ENCODE measurements at regions of chr15 and their contacts with region 1.

Region 1: GRCh38 chr15:99104788-99105513 is at the start of gene SYNM:
- DNase-seq: peak; percentile 70 to 84 (median 71)
- ATAC-seq: peak; percentile 96
- H3K4me3 ChIP-seq: no peak within 1 kb of the TSS
- H3K4me1 ChIP-seq: peaks cover 11% of the 10 kb centered on the region
- CTCF ChIP-seq: peak; percentile 62
- total RNA-seq, gene SYNM: 10.9 to 777 (median 37.0) TPM

Region 2: GRCh38 chr15:99076552-99077308 is 28.2 kb before region 1 on chr15:
- intact Hi-C with region 1: no loop called
- DNase-seq: peak in 2 of 3 donors; percentile 33 to 62
- ATAC-seq: peak; percentile 92
- H3K4me3 ChIP-seq: no peak overlapping the region
- H3K4me1 ChIP-seq: no peaks in the 10 kb centered on the region
- CTCF ChIP-seq: peak; percentile 50

Region 3: DNA sequence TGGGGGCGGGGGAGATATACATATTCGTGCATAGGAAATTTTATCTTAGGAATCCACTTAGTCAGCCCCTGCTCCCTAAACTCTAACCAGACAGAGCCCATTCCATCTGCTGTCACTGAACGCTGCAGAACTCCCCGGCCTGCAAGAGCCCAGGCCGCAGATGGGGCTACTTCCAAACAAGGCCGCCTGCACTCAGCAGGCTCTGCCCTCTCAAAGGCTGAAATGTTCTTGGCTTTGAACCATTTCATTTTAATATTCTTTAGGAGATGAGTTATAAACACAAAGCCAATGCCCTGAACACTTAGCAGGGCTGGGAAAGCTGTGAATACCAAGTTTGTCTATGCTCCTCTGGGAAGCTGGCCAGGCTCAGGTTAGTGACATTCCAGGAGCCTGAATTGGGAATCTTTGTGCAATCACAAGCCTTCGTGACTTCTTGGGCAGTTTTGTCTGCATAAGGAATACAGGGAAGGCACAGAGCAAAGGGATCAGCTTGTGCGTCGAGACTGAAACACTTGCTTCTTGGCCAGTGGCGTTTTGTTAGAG is 64.9 kb after region 1 on chr15:
- intact Hi-C with region 1: loop called in 1 of 2 experiments (anchors 10 kb)
- DNase-seq: no peak
- ATAC-seq: peak; percentile 26
- H3K4me3 ChIP-seq: no peak overlapping the region
- H3K4me1 ChIP-seq: no peaks in the 10 kb centered on the region
- CTCF ChIP-seq: no peak

Region 4: DNA sequence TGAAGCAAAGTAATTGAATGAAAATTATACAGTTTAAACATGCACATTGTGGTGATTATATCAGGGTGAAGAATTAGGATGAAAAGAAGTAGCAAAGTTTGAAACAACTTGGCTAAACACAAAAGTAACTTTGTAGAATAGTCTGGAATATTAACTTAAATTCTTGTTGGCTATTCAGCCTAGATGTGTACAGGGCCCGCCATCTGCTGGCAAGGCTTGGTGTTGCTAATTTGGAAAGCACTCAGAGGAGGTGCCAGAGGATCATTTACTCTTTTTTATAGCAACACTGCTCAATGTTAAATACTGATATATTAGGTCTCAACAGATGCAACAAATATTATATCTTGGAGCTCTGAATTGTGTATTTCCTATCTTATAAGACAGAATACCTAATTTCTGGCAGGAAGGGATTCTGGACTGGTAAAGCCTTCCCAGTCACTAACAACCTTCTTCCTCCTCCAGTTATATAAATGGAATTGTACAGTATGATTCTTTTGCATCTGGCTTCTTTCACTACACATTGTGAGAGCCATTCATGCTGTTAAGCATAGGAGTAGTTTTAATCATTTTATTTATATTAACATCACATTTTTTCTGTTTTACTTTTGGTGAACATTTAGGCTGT is 108.3 kb after region 1 on chr15:
- intact Hi-C with region 1: loop called in 1 of 2 experiments (anchors 5 kb)
- DNase-seq: peak in 2 of 3 donors; percentile 80 to 93
- ATAC-seq: peak; percentile 80
- H3K4me3 ChIP-seq: no peak overlapping the region
- H3K4me1 ChIP-seq: no peaks in the 10 kb centered on the region
- CTCF ChIP-seq: peak; percentile 73

Measured in mucosa of descending colon (tissue), 3 donors.